ENCODE measurements at regions of chr5 and their contacts with region 1.

Region 1: GRCh38 chr5:135174315-135175096 is 140.5 kb upstream of the PITX1 start:
- DNase-seq: peak; percentile 29 to 58
- H3K4me3 ChIP-seq: no peak overlapping the region
- H3K27ac ChIP-seq: no peak overlapping the region
- H3K4me1 ChIP-seq: no peaks in the 10 kb centered on the region; a peak in 1 of 7 replicates
- H3K27me3 ChIP-seq: no peaks in the 10 kb centered on the region; a peak in 3 of 7 replicates
- CTCF ChIP-seq: peak; percentile 82 to 93 (median 88)
- EP300 ChIP-seq: no peak
- POLR2A ChIP-seq: no peak
- RAD21 ChIP-seq: peak; percentile 73 to 87

Region 2: GRCh38 chr5:134917070-134917815 is 257.3 kb before region 1 on chr5:
- CTCF ChIA-PET with region 1: interaction called, 10 read pairs
- POLR2A ChIA-PET with region 1: no interaction called
- DNase-seq: peak in 1 of 2 experiments; percentile 67
- H3K4me3 ChIP-seq: no peak overlapping the region
- H3K27ac ChIP-seq: no peak overlapping the region
- H3K4me1 ChIP-seq: no peaks in the 10 kb centered on the region; a peak in 1 of 7 replicates
- H3K27me3 ChIP-seq: no peaks in the 10 kb centered on the region
- CTCF ChIP-seq: peak; percentile 59 to 68 (median 63)
- EP300 ChIP-seq: no peak
- POLR2A ChIP-seq: no peak
- RAD21 ChIP-seq: peak; percentile 61 to 63

Region 3: GRCh38 chr5:135162661-135163265 is 11.7 kb before region 1 on chr5:
- CTCF ChIA-PET with region 1: interaction called, 23 read pairs
- POLR2A ChIA-PET with region 1: no interaction called
- DNase-seq: no peak
- H3K4me3 ChIP-seq: no peak overlapping the region
- H3K27ac ChIP-seq: no peak overlapping the region
- H3K4me1 ChIP-seq: no peaks in the 10 kb centered on the region
- H3K27me3 ChIP-seq: no peaks in the 10 kb centered on the region; a peak in 2 of 7 replicates
- CTCF ChIP-seq: peak in 2 of 3 experiments; percentile 26 to 45; a peak in 2 of 4 replicates
- EP300 ChIP-seq: no peak
- POLR2A ChIP-seq: no peak
- RAD21 ChIP-seq: peak; percentile 13 to 43; a peak in 3 of 4 replicates

Region 4: GRCh38 chr5:135185481-135186065 is 11.1 kb after region 1 on chr5:
- CTCF ChIA-PET with region 1: interaction called, 25 read pairs
- POLR2A ChIA-PET with region 1: no interaction called
- DNase-seq: no peak
- H3K4me3 ChIP-seq: no peak overlapping the region
- H3K27ac ChIP-seq: no peak overlapping the region
- H3K4me1 ChIP-seq: peaks cover 0 to 7% (median 3%) of the 10 kb centered on the region in 4 experiments; a peak in 5 of 7 replicates
- H3K27me3 ChIP-seq: peaks cover 0 to 3% (median 1%) of the 10 kb centered on the region in 4 experiments; a peak in 5 of 7 replicates
- CTCF ChIP-seq: no peak
- EP300 ChIP-seq: no peak
- POLR2A ChIP-seq: no peak
- RAD21 ChIP-seq: no peak

Region 5: DNA sequence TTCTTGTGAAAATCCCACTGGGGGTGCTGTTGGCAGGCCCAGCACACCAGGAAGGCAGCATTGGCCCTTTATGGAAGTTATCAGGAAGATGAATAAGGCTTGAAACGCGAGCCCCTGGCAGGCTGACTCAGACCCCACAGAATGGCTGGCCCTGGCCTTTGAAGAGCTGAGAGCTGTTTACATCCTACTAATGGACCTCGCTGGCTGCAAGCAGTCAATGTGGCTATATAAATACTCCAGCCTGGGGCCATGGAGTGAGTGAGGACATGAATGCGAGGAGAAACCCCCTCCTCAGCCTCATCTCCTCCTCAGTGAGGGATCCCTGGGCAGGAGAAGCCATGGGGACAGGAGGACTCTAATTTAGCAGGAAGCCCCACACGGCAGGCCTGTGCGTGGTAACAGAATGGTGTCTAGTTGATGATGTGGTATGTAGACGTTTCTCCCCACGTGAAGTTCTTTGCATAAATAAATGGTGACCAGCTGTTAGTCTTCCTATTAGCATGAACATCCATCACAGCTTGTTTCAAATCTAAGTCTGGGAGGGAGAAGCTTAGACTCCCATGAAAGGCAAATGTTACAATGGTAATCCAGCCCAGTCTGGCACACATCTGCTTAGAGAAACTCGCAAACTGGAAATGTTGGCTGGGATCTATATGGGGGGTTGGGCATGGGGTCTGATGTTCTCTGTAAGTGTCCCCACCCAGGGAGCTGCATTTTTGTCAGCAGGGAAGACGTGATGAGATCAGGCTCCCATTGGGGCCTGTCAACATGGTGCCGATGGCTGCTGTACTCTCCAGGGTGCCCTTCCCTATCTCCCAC is 34.6 kb after region 1 on chr5:
- CTCF ChIA-PET with region 1: interaction called, 10 read pairs
- POLR2A ChIA-PET with region 1: no interaction called
- DNase-seq: peak in 1 of 2 experiments; percentile 39
- H3K4me3 ChIP-seq: no peak overlapping the region
- H3K27ac ChIP-seq: no peak overlapping the region
- H3K4me1 ChIP-seq: peaks cover 0 to 9% (median 6%) of the 10 kb centered on the region in 4 experiments; a peak in 5 of 7 replicates
- H3K27me3 ChIP-seq: no peaks in the 10 kb centered on the region; a peak in 1 of 7 replicates
- CTCF ChIP-seq: no peak
- EP300 ChIP-seq: no peak
- POLR2A ChIP-seq: no peak
- RAD21 ChIP-seq: no peak

Region 6: DNA sequence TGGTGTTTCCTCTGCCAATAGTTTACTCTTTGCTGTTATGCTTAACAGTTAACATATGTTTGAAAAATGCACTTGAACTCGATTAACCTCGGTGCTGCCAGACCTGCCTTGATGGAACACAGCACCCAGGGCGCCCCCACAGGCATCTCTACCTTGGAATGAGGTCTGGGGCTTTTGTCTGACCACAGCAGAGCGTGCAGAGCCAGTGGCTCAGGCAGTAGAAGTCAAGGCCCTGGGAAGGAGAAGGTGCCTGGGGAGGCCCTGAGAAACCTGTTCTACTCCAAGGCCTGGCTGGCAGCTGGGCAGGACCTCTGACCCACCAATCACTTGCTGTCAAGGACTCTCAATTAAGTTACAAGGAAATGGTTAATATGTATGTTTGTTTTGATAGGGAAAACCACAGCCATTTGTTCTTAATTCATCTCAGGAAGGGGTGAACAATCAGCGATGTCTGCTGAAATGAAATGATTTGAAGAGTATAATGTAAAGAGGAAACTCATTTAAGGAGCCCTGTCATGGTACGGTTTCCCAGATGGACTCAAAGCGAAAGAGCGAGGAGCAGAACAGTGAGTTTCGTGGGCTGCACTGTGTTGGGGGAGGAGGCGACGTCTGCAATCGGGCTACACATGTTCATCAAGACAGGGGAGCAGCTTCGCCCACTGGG is 202.6 kb after region 1 on chr5:
- CTCF ChIA-PET with region 1: no interaction called
- POLR2A ChIA-PET with region 1: no interaction called
- DNase-seq: no peak
- H3K4me3 ChIP-seq: no peak overlapping the region
- H3K27ac ChIP-seq: no peak overlapping the region
- H3K4me1 ChIP-seq: no peaks in the 10 kb centered on the region
- H3K27me3 ChIP-seq: no peaks in the 10 kb centered on the region
- CTCF ChIP-seq: no peak
- EP300 ChIP-seq: no peak
- POLR2A ChIP-seq: no peak
- RAD21 ChIP-seq: no peak

Measured in H1 (cell line).